Activated CD4-positive, alpha-beta T cell treated with anti-CD3 and anti-CD28 coated beads, Interleukin-2, amount 10 ng/mL, durations not matched to agents 24 days and 14 days (primary cell): ENCODE measurements at regions of chr6 and their contacts with region 1.

Region 1: DNA sequence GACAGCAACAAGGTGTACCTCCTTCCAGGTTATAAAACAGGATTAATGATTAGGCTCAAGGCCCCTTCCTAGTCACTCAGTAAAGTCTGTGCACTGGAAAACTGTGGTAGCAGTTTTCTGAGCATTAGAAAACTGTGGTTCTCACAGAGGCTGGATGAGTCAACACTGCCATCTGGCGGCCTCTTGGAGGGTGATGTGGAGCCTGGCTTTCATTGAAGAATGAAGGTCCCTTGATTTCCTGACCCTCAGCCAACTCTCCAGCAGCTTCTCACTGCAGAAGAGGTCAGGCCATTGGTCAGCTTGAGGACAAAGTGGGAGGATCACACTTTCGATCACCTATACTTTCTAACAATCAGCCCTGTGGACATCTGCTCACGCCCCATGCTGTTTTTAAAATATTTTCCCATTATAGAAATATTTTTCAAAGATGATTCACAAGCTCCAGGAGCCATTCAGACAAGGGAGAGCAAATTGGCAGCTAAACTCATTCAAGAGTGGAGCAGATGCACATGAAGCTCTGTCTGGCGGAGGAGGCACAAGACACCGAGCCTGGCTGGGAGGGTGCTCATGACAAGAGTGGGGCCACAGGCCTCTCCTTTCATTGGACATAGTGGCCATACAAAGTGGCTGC is 23.2 kb downstream of the PSMB1 start:
- DNase-seq: peak; percentile 89
- H3K4me3 Mint-ChIP-seq: no peak overlapping the region
- H3K27ac Mint-ChIP-seq: no peak overlapping the region
- H3K4me1 Mint-ChIP-seq: peaks cover 6% of the 10 kb centered on the region
- H3K27me3 Mint-ChIP-seq: peaks cover 10% of the 10 kb centered on the region

Region 2: DNA sequence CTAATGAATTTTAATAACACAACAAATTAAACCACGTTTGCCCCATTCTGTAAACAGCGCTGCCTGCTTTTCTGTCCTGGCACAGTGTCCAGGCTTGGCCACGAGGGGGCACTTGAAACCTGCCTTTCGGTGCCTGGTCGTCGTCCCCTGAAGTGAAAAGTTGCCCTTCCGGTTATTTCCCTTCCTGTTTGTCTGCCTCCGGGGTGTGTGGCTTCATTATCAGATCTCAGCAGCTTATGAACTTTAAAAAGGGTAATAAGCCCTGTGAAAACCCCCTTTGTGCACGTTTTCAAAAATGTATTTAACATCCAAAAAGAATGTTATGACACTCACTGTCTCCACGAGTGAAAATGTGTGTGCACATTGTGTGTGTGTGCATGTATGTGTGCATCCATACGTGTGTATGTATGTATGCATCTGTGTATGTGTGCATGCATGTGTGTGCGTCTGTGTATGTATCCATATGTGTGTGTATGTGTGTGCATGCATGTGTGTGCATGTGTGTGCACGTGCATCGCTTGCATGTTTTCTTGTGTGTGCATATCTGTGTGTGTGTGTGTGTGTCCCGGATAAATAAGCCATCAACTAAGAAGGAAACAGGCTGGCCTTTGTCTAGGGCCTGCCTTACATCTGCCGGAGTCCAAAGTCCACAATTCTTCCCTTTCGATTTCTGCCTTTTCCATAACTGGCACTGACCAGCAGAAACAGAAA is 1634.7 kb before region 1 on chr6:
- intact Hi-C with region 1: loop called (anchors 5 kb)
- DNase-seq: peak; percentile 93
- H3K4me3 Mint-ChIP-seq: peak overlapping the region; percentile 54
- H3K27ac Mint-ChIP-seq: no peak overlapping the region
- H3K4me1 Mint-ChIP-seq: peaks cover 9% of the 10 kb centered on the region
- H3K27me3 Mint-ChIP-seq: peaks cover 3% of the 10 kb centered on the region

Region 3: DNA sequence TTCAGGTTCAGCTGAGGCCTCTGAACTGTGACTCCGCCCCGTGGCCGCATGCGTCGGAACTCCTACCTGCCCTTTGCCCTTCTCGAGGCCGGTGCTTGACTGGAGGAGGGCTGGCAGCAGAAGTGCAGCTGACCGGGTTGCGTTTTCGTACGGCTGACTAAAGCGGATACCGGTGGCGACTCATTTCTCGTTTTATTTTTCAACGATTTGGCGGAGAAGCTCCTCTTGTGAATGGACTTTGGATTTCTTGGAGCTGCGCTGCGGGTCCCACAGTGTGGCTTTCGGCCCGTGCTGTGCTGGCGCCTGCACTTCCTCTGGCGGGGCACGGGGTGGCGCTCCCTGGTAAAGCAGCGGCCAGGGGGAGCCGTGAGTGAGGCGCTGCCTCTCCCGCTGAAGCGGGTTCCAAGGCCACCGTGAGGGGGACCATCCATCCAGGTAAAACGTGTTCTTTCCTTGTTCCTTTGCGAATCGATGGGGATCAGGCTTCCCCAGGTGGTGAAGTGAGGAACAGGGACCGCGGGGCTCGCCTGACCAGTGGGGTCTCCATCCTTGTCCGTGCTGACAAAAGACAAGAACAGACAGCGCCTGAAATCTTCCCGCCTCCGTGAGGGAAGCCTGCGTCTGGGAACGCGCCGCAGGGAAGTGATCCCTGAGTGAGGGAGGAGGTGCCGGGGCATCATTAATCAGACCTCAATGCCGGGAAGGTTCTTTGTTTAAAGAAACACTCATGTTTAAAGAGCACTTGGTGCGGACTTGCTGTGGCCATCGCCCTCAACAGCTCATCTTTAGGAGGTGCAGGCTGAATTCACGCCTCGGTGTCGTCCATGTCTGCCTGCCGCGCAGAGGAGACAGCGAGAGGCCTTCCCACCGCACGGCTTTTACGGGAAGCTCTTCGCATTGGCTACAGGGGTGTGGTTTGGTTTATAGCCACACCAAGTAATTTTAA is 739.7 kb before region 1 on chr6:
- intact Hi-C with region 1: loop called (anchors 1 kb)
- DNase-seq: peak; percentile 91
- H3K4me3 Mint-ChIP-seq: peak overlapping the region; percentile 88
- H3K27ac Mint-ChIP-seq: peak overlapping the region; percentile 53
- H3K4me1 Mint-ChIP-seq: peaks cover 15% of the 10 kb centered on the region
- H3K27me3 Mint-ChIP-seq: peaks cover 35% of the 10 kb centered on the region

Region 4: GRCh38 chr6:169831450-169832246 is 698.3 kb before region 1 on chr6:
- intact Hi-C with region 1: loop called (anchors 5 kb)
- DNase-seq: peak; percentile 91
- H3K4me3 Mint-ChIP-seq: no peak overlapping the region
- H3K27ac Mint-ChIP-seq: no peak overlapping the region
- H3K4me1 Mint-ChIP-seq: no peaks in the 10 kb centered on the region
- H3K27me3 Mint-ChIP-seq: peaks cover 39% of the 10 kb centered on the region

Region 5: GRCh38 chr6:170596426-170596825 is 66.5 kb after region 1 on chr6:
- intact Hi-C with region 1: no loop called
- DNase-seq: peak; percentile 27
- H3K4me3 Mint-ChIP-seq: no peak overlapping the region
- H3K27ac Mint-ChIP-seq: no peak overlapping the region
- H3K4me1 Mint-ChIP-seq: no peaks in the 10 kb centered on the region
- H3K27me3 Mint-ChIP-seq: peaks cover 25% of the 10 kb centered on the region